ENCODE measurements at regions of chr12 and their contacts with region 1.

Region 1: DNA sequence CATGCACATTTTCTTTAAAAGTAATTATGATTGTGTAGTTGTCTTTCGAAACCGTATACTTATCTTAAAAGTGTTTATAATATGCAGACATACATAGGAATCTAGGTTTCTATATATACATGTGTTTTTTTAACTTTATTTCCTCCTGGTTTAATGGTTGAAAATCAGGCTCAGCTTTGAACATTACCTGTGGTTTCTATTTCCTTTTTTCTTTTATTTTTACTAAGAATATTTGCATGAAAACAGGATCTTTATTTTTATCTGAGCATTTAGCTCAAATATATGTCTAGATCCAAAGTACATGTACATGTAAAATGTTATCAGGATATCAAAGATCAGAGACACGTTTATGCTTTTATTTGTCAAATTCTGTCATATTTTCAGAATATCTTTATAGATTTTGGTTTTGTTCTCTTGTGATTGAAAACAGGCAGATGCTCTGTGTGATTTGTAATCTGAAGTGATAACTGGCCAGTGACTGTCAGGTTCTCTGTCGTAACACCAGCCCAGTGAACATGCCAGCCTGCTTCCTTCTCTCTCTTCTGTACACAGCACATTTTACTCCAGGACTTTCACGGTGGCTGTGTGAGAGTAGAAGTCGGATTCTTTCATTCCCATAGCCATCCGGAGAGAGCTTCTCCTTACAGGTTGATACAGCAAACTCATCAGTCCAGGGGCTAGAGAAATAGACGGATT is 13.7 kb downstream of the TCTN1 start:
- DNase-seq: peak; percentile 69
- ATAC-seq: peak; percentile 70
- H3K4me3 ChIP-seq: peak overlapping the region; percentile 19 to 57 (median 31)
- H3K4me3 Mint-ChIP-seq: peak overlapping the region; percentile 78
- H3K27ac ChIP-seq: peak overlapping the region; percentile 93 to 94
- H3K27ac Mint-ChIP-seq: peak overlapping the region; percentile 96
- H3K4me1 ChIP-seq: peaks cover 81 to 87% of the 10 kb centered on the region in 2 donors
- H3K4me1 Mint-ChIP-seq: peaks cover 73% of the 10 kb centered on the region
- H3K27me3 ChIP-seq: no peaks in the 10 kb centered on the region
- H3K27me3 Mint-ChIP-seq: no peaks in the 10 kb centered on the region
- CTCF ChIP-seq: no peak

Region 2: DNA sequence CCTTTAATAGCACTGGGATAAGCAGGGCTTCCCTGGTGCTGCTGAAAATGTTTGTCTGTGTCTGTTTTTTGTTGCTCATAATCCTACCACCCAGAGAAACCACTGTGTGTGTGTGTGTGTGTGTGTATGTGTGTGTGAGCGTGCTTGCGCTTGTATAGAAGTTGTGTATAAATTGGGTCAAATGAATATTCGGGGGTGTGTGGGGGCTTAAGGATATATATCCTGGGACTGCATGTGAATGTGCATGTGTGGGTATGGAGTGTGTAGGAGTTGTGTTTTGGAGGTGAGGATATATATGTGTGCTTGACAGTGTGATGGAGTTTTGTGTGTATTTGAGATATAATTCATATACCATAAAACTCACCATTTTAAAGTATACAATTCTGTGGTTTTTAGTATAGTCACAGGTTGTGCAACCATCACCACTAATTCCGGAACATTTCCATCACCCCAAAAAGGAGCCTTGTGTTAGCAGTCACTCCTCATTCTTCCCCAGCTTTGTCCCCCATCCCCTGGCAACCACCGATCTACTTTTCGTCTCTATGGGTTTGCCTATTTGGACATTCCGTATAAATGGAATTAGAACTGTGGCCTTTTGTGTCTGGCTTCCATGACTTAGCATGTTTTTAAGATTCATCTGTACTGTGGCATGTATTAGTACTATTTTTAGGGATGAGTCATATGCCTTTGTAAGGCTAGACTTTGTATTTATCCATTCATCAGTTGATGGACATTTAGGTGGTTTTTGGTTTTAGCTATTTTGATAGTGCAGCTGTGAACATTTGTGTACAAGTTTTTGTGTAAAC is 11.9 kb after region 1 on chr12:
- CTCF ChIA-PET with region 1: interaction called, 11 read pairs
- POLR2A ChIA-PET with region 1: interaction called, 6 read pairs
- intact Hi-C with region 1: loop called (anchors 1 kb)
- DNase-seq: no peak
- ATAC-seq: peak; percentile 39
- H3K4me3 ChIP-seq: no peak overlapping the region
- H3K4me3 Mint-ChIP-seq: peak overlapping the region; percentile 53
- H3K27ac ChIP-seq: peak overlapping the region in 1 of 2 donors; percentile 90
- H3K27ac Mint-ChIP-seq: peak overlapping the region; percentile 98
- H3K4me1 ChIP-seq: peaks cover 87 to 98% of the 10 kb centered on the region in 2 donors
- H3K4me1 Mint-ChIP-seq: peaks cover 89% of the 10 kb centered on the region
- H3K27me3 ChIP-seq: no peaks in the 10 kb centered on the region
- H3K27me3 Mint-ChIP-seq: no peaks in the 10 kb centered on the region
- CTCF ChIP-seq: no peak

Region 3: GRCh38 chr12:110647631-110648040 is 20.0 kb after region 1 on chr12:
- CTCF ChIA-PET with region 1: interaction called, 56 read pairs
- POLR2A ChIA-PET with region 1: interaction called, 5 read pairs
- intact Hi-C with region 1: loop called (anchors 1 kb)
- DNase-seq: peak; percentile 95
- ATAC-seq: peak; percentile 85
- H3K4me3 ChIP-seq: peak overlapping the region in 1 of 5 experiments; percentile 5
- H3K4me3 Mint-ChIP-seq: peak overlapping the region; percentile 79
- H3K27ac ChIP-seq: peak overlapping the region; percentile 90
- H3K27ac Mint-ChIP-seq: peak overlapping the region; percentile 98
- H3K4me1 ChIP-seq: peaks cover 90% of the 10 kb centered on the region in 2 donors
- H3K4me1 Mint-ChIP-seq: peaks cover 91% of the 10 kb centered on the region
- H3K27me3 ChIP-seq: no peaks in the 10 kb centered on the region
- H3K27me3 Mint-ChIP-seq: no peaks in the 10 kb centered on the region
- CTCF ChIP-seq: no peak